ENCODE measurements at regions of chr10 and their contacts with region 1.

Region 1: DNA sequence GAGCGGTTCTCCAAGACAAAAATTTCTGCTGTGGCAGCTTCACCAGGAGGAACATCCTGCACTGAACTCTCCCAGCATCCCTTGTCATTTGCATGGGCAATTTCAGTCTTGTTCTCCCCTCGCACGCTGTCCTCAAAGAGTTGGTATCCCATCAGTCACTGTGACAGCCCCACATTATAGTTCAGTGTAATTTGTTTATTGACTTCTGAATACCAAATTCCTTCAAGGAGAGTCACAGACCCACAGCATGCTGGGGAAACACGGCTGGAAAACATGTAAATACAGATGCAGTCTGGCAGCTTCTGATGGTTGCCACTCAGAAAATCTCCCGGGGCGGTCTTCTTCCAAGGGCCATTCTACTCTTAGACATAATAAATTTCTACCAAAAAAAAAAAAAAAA is 151.0 kb upstream of the NEBL start:
- DNase-seq: peak; percentile 66
- H3K4me3 Mint-ChIP-seq: no peak overlapping the region
- H3K27ac Mint-ChIP-seq: peak overlapping the region; percentile 50
- H3K4me1 Mint-ChIP-seq: peaks cover 27% of the 10 kb centered on the region
- H3K27me3 Mint-ChIP-seq: no peaks in the 10 kb centered on the region
- CTCF ChIP-seq: no peak

Region 2: DNA sequence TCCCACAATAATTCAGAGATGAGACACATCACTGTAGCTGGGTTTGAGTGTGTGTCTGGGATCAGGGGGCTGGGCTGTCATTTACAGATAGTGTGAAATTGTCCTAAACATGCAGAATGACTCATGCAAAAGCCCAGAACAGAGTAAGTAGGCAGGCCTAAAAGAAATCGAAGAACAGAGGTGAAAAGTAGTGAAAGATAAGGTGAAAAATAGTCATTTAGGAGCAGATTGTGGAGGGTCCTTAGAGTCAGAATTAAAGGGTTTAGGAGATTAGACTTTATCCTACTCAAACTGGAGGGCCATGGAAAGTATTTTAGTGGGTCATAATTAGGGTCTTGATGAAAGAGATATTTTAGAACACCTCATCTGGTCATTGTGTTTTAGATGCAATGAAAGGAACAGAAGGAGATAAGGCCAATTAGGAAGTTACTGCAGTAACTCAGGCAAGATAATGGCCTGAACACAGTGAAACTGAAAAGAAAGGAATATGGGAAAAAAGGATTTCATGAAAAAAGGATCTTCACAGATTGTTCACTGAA is 92.6 kb before region 1 on chr10:
- CTCF ChIA-PET with region 1: no interaction called
- POLR2A ChIA-PET with region 1: no interaction called
- intact Hi-C with region 1: no loop called
- DNase-seq: peak; percentile 17
- H3K4me3 Mint-ChIP-seq: no peak overlapping the region
- H3K27ac Mint-ChIP-seq: no peak overlapping the region
- H3K4me1 Mint-ChIP-seq: peaks cover 21% of the 10 kb centered on the region
- H3K27me3 Mint-ChIP-seq: no peaks in the 10 kb centered on the region
- CTCF ChIP-seq: no peak

Region 3: GRCh38 chr10:21069929-21070700 is 22.0 kb after region 1 on chr10:
- CTCF ChIA-PET with region 1: no interaction called
- POLR2A ChIA-PET with region 1: interaction called, 4 read pairs
- intact Hi-C with region 1: loop called (anchors 1 kb)
- DNase-seq: no peak
- H3K4me3 Mint-ChIP-seq: no peak overlapping the region
- H3K27ac Mint-ChIP-seq: no peak overlapping the region
- H3K4me1 Mint-ChIP-seq: no peaks in the 10 kb centered on the region
- H3K27me3 Mint-ChIP-seq: no peaks in the 10 kb centered on the region
- CTCF ChIP-seq: no peak

Measured in MCF 10A (cell line).